Mammary epithelial cell (primary cell): ENCODE measurements at regions of chr7 and their contacts with region 1.

Region 1: GRCh38 chr7:2970861-2971260 is 72.8 kb downstream of the CARD11 start:
- DNase-seq: no peak
- H3K4me3 ChIP-seq: no peak overlapping the region
- H3K27ac ChIP-seq: no peak overlapping the region
- H3K4me1 ChIP-seq: no peaks in the 10 kb centered on the region
- H3K27me3 ChIP-seq: no peaks in the 10 kb centered on the region
- CTCF ChIP-seq: no peak

Region 2: DNA sequence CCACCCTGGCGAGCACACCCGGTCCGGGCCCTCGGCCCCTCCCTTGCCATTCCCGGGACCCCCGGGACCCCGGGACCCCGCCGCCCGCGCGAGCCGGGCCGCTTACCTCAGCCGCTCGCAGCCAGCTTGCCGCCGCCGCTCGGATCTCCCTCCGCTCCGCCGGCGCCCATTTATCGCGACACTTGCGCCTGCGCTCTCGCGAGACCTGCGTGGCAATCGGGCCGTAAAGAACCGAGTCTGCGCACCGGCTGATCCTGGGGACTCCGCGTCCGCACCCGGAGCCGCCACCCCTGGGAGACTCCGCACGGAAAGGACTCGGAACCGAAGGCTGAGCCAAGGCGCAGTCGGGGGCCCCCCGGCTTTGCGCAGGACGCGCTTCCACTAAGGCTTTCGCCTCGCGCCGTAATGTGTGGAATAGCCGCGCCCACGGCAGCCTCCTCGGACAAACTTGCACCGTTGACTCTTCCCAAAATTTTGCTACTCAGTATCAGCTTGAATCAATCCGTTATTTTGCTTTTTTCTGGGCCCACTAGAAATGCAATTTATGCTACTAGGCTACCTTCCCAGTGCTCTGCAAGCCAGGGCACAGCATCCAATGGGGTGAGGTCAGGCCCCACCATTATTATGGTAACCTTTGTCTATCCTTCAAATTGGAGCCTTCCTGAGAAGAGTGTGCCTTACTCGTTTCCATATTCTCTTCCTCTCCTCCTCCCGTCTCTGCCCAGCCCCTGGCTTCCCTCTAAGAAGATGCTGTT is 737.9 kb before region 1 on chr7 and contains the start of gene MAD1L1:
- CTCF ChIA-PET with region 1: no interaction called
- dilution Hi-C with region 1: no loop called
- in situ Hi-C with region 1: no loop called
- intact Hi-C with region 1: no loop called
- DNase-seq: peak; percentile 86
- H3K4me3 ChIP-seq: peak within 1 kb of the TSS; percentile 56 to 94 (median 84)
- H3K27ac ChIP-seq: peak within 1 kb of the TSS; percentile 38
- H3K4me1 ChIP-seq: peaks cover 20% of the 10 kb centered on the region
- H3K27me3 ChIP-seq: no peaks in the 10 kb centered on the region
- CTCF ChIP-seq: no peak
- total RNA-seq, gene MAD1L1: 20.7 to 35.4 TPM

Region 3: GRCh38 chr7:3033581-3033980 is 62.7 kb after region 1 on chr7:
- CTCF ChIA-PET with region 1: no interaction called
- dilution Hi-C with region 1: no loop called
- in situ Hi-C with region 1: no loop called
- intact Hi-C with region 1: no loop called
- DNase-seq: no peak
- H3K4me3 ChIP-seq: no peak overlapping the region
- H3K27ac ChIP-seq: no peak overlapping the region
- H3K4me1 ChIP-seq: no peaks in the 10 kb centered on the region
- H3K27me3 ChIP-seq: no peaks in the 10 kb centered on the region
- CTCF ChIP-seq: no peak

Region 4: GRCh38 chr7:3283130-3283704 is 312.4 kb after region 1 on chr7:
- CTCF ChIA-PET with region 1: interaction called, 22 read pairs
- dilution Hi-C with region 1: no loop called
- in situ Hi-C with region 1: no loop called
- intact Hi-C with region 1: no loop called
- DNase-seq: peak; percentile 49
- H3K4me3 ChIP-seq: no peak overlapping the region
- H3K27ac ChIP-seq: no peak overlapping the region
- H3K4me1 ChIP-seq: no peaks in the 10 kb centered on the region
- H3K27me3 ChIP-seq: no peaks in the 10 kb centered on the region
- CTCF ChIP-seq: no peak